Activated B cell treated with CpG ODN at 0.5 μM for 24 hours (primary cell): ENCODE measurements at regions of chr6 and their contacts with region 1.

Region 1: DNA sequence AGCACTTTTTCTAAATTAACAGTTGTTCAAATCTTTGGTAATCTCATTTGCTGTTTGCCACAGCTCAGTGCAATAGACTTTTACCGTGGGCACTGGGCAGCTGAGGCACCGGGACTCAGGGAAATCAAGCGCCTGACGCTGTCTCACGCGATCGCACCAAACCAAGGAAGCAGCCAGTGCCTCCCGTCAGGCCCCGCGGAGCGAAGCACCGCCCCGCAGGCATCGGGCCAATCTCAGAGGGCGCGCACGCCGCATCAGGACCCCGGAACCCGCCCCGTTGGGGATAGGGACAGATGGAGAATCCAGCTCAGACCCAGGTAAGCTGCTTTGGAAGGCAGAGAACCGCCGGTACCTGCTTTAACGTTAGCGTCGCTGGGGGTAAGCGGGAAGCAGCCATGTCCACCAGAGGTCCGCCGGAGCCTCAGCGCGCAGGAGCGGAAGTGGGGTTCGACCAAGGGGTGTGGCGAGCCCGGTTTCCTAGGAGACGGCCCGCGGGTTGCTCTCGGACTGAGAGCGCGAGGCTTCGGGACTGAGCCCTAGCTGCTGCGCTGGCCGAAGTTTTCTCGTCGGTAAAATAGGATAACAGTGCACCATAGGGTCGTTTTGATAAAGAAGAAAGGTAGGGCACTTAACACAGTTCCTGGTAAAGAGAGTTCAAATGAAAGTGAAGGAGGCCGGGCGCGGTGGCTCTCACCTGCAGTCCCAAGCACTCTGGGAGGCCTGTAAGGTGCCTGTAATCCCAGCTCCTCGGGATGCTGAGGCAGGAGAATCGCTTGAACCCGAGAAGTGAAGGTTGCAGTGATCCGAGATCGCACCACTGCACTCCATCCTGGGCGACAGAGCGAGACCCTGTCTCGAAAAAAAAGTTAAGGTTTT is at the start of gene LYRM2:
- DNase-seq: peak; percentile 89
- ATAC-seq: peak; percentile 93
- H3K4me3 Mint-ChIP-seq: peak within 1 kb of the TSS; percentile 90
- H3K27ac Mint-ChIP-seq: peak within 1 kb of the TSS; percentile 92
- H3K4me1 Mint-ChIP-seq: peaks cover 28% of the 10 kb centered on the region
- H3K27me3 Mint-ChIP-seq: no peaks in the 10 kb centered on the region
- CTCF ChIP-seq: no peak
- total RNA-seq, gene LYRM2: 41.9 and 44.9 TPM in 2 replicates

Region 2: GRCh38 chr6:89145787-89146646 is 492.5 kb before region 1 on chr6 and contains the start of gene PM20D2:
- CTCF ChIA-PET with region 1: no interaction called
- POLR2A ChIA-PET with region 1: interaction called, 5 read pairs
- intact Hi-C with region 1: loop called (anchors 2 kb)
- DNase-seq: peak; percentile 72
- ATAC-seq: peak; percentile 78
- H3K4me3 Mint-ChIP-seq: peak within 1 kb of the TSS; percentile 90
- H3K27ac Mint-ChIP-seq: peak within 1 kb of the TSS; percentile 92
- H3K4me1 Mint-ChIP-seq: peaks cover 22% of the 10 kb centered on the region
- H3K27me3 Mint-ChIP-seq: no peaks in the 10 kb centered on the region
- CTCF ChIP-seq: no peak
- total RNA-seq, gene PM20D2: 10.9 and 11.6 TPM in 2 replicates

Region 3: GRCh38 chr6:89412071-89413005 is 226.2 kb before region 1 on chr6 and contains the start of gene RRAGD:
- CTCF ChIA-PET with region 1: no interaction called
- POLR2A ChIA-PET with region 1: interaction called, 16 read pairs
- intact Hi-C with region 1: no loop called
- DNase-seq: peak; percentile 56
- ATAC-seq: peak; percentile 72
- H3K4me3 Mint-ChIP-seq: peak within 1 kb of the TSS; percentile 92
- H3K27ac Mint-ChIP-seq: peak within 1 kb of the TSS; percentile 56
- H3K4me1 Mint-ChIP-seq: peaks cover 21% of the 10 kb centered on the region
- H3K27me3 Mint-ChIP-seq: peaks cover 14% of the 10 kb centered on the region
- CTCF ChIP-seq: no peak
- total RNA-seq, gene RRAGD: 5.4 and 5.6 TPM in 2 replicates

Region 4: DNA sequence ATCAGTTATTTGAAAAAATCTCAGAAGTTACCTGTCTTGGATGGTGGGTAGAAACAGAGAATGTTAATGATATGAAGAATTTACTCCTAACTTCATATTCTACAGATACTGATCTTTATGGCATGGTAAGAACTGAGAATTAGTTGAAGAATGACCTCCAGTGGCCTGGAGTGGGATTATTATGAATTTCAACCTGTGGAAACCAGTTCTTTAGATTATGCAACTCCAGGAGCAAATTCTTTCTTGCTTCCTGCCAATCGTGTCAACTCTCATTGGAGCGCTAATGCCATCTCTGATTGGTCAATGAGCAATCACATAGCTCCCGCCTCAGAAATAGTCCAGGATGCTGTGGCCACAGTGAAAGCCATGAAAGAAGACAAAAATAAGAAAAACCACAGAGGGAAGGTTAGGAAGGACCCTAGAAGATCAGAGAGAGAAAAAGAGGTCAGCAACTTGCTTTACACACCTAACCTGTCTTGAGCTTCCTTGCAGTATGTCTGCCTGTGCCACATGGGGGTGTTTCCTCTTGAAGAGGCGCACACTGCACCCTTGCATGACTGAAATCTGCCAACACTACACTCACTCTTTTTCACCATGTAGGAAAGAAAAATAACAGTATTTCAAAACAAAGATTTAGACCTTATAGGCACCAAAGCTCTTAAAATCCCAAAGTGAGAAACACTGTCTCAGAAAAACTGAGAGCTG is 40.4 kb before region 1 on chr6:
- CTCF ChIA-PET with region 1: no interaction called
- POLR2A ChIA-PET with region 1: interaction called, 7 read pairs
- intact Hi-C with region 1: loop called (anchors 2 kb)
- DNase-seq: no peak
- ATAC-seq: no peak
- H3K4me3 Mint-ChIP-seq: no peak overlapping the region
- H3K27ac Mint-ChIP-seq: no peak overlapping the region
- H3K4me1 Mint-ChIP-seq: peaks cover 30% of the 10 kb centered on the region
- H3K27me3 Mint-ChIP-seq: no peaks in the 10 kb centered on the region
- CTCF ChIP-seq: no peak

Region 5: DNA sequence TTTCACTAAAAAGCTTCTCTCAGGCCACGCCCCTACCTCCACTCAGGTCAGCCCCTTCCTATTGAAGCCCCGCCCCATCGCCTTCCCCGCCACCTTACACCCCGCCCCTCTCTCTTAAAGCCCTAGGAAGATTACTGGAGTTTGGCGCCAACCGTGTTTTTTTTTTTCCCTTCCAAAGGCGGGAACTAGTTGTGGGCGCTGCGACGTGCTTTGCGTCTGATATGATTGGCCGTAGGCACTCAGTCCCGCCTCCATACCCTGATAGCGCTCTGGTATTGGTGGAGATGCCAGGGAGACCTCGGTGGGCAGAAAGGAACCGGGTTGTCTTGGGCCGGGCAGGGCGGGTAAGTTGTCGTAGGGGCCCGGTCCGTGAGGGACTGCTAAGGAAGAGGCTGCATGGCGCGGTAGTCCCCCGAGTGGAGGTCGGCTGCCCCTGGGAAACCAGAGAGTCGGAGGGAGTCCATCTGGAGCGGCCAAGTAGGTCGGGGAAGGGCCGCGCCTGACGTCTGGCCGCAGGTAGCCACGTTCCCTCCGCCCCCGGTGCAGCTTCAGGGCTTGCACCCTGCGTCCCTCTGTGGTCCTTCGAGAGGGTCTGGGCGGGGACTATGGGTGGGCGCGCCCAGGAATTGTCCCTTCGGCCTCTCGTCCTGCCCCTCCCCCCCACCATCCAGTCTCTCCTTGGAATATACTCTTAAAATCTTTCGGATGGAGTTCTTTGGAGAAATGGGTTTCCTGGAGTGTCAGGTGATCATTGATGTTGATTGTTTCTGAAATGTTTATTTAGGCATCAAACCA is 191.2 kb after region 1 on chr6 and contains the start of gene CASP8AP2:
- CTCF ChIA-PET with region 1: no interaction called
- POLR2A ChIA-PET with region 1: interaction called, 8 read pairs
- intact Hi-C with region 1: loop called (anchors 1 kb)
- DNase-seq: peak; percentile 76
- ATAC-seq: peak; percentile 93
- H3K4me3 Mint-ChIP-seq: peak within 1 kb of the TSS; percentile 99
- H3K27ac Mint-ChIP-seq: peak within 1 kb of the TSS; percentile 96
- H3K4me1 Mint-ChIP-seq: peaks cover 37% of the 10 kb centered on the region
- H3K27me3 Mint-ChIP-seq: no peaks in the 10 kb centered on the region
- CTCF ChIP-seq: no peak
- total RNA-seq, gene CASP8AP2: 17.1 and 17.8 TPM in 2 replicates